B cell (primary cell): ENCODE measurements at regions of chr11 and their contacts with region 1.

Region 1: GRCh38 chr11:59135648-59136461 is 6.8 kb upstream of the FAM111A start:
- DNase-seq: peak; percentile 90
- ATAC-seq: peak; percentile 99
- H3K4me3 ChIP-seq: peak overlapping the region in 1 of 5 experiments; percentile 18
- H3K4me3 Mint-ChIP-seq: peak overlapping the region; percentile 62
- H3K27ac ChIP-seq: no peak overlapping the region
- H3K27ac Mint-ChIP-seq: peak overlapping the region; percentile 88
- H3K4me1 ChIP-seq: peaks cover 14 to 23% of the 10 kb centered on the region in 2 donors
- H3K4me1 Mint-ChIP-seq: peaks cover 31% of the 10 kb centered on the region
- H3K27me3 ChIP-seq: no peaks in the 10 kb centered on the region
- H3K27me3 Mint-ChIP-seq: no peaks in the 10 kb centered on the region
- CTCF ChIP-seq: peak; percentile 98

Region 2: GRCh38 chr11:57345555-57346211 is 1790.2 kb before region 1 on chr11:
- CTCF ChIA-PET with region 1: no interaction called
- POLR2A ChIA-PET with region 1: no interaction called
- intact Hi-C with region 1: loop called (anchors 5 kb)
- DNase-seq: peak; percentile 78
- ATAC-seq: peak; percentile 82
- H3K4me3 ChIP-seq: no peak overlapping the region
- H3K4me3 Mint-ChIP-seq: no peak overlapping the region
- H3K27ac ChIP-seq: no peak overlapping the region
- H3K27ac Mint-ChIP-seq: no peak overlapping the region
- H3K4me1 ChIP-seq: peaks cover 0 to 6% of the 10 kb centered on the region in 2 donors
- H3K4me1 Mint-ChIP-seq: peaks cover 6% of the 10 kb centered on the region
- H3K27me3 ChIP-seq: no peaks in the 10 kb centered on the region
- H3K27me3 Mint-ChIP-seq: peaks cover 8% of the 10 kb centered on the region
- CTCF ChIP-seq: peak; percentile 82

Region 3: DNA sequence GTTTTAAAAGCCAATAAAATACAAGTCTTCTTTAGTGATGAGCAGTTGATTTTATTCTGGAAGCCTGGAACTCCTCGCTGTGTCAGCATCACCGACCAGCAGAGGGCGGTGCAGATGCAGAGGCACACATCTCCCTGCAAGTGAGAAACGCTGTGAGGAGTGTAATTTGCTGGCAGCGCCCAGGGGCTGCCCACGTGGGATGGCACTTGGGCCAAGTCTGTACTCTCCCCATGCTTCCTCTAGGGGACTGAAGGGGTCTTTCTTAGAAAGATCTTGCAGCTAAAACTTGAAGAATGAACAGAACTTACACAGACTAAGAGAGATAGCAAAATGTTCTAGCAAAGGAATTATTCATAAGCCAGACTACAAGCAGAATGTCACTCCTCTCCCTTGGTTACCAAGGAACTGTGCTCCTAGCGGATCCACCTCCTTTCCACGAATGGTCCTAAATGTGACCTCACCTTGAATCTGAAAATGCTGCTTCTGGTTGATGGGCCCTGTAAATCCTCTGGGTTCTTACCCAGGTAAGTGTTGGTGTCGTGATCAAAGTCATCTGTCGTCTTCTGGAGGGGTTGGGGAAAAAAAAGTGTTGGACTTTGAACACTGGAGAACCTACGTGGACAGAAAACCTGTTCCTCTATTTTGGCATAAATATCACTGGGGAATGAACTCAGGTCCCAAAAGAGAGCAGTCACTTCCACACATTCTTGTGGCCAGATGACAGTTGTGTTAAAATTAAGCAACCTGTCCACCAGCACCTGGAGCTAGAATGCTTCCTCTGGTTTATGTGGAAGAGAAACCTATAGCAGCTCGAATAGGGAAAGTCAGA is 481.6 kb before region 1 on chr11:
- CTCF ChIA-PET with region 1: interaction called, 54 read pairs
- POLR2A ChIA-PET with region 1: no interaction called
- intact Hi-C with region 1: loop called (anchors 1 kb)
- DNase-seq: peak; percentile 81
- ATAC-seq: peak; percentile 98
- H3K4me3 ChIP-seq: no peak overlapping the region
- H3K4me3 Mint-ChIP-seq: no peak overlapping the region
- H3K27ac ChIP-seq: no peak overlapping the region
- H3K27ac Mint-ChIP-seq: no peak overlapping the region
- H3K4me1 ChIP-seq: peaks cover 0 to 5% of the 10 kb centered on the region in 2 donors
- H3K4me1 Mint-ChIP-seq: peaks cover 4% of the 10 kb centered on the region
- H3K27me3 ChIP-seq: no peaks in the 10 kb centered on the region
- H3K27me3 Mint-ChIP-seq: no peaks in the 10 kb centered on the region
- CTCF ChIP-seq: peak; percentile 93

Region 4: DNA sequence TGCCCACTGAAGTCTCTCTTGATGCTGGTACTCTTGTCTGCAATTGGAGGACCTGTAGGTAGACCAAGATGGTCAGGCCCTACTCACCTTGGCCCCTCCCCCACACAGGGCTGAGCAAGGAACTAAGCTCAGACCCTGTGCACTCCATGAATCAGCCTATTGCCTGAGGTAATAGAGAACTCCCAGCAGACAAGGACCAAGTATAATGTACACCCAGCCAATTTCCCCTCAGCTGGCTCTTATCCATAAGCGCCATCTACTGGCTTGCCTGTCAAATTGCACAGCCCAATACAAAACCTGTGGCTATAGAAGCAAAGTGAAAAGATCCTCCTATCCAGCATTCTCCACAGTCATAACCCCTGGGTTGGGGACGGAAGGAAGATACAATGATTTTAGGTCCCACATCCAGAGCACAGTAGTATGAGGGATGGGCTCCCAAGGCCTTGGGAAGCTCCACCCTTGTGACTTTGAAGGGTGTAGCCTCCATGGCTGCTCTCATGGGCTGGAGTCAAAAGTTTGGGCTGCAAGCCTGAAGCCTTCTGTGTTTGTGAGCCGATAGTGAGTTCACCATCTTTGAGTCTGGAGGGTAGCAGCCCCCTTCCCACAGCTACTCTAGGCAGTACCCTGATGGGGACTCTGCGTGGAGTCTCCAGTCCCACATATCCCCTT is 347.4 kb before region 1 on chr11:
- CTCF ChIA-PET with region 1: interaction called, 12 read pairs
- POLR2A ChIA-PET with region 1: interaction called, 5 read pairs
- intact Hi-C with region 1: no loop called
- DNase-seq: peak; percentile 53
- ATAC-seq: peak; percentile 80
- H3K4me3 ChIP-seq: no peak overlapping the region
- H3K4me3 Mint-ChIP-seq: no peak overlapping the region
- H3K27ac ChIP-seq: no peak overlapping the region
- H3K27ac Mint-ChIP-seq: no peak overlapping the region
- H3K4me1 ChIP-seq: no peaks in the 10 kb centered on the region
- H3K4me1 Mint-ChIP-seq: no peaks in the 10 kb centered on the region
- H3K27me3 ChIP-seq: no peaks in the 10 kb centered on the region
- H3K27me3 Mint-ChIP-seq: peaks cover 14% of the 10 kb centered on the region
- CTCF ChIP-seq: peak; percentile 75

Region 5: DNA sequence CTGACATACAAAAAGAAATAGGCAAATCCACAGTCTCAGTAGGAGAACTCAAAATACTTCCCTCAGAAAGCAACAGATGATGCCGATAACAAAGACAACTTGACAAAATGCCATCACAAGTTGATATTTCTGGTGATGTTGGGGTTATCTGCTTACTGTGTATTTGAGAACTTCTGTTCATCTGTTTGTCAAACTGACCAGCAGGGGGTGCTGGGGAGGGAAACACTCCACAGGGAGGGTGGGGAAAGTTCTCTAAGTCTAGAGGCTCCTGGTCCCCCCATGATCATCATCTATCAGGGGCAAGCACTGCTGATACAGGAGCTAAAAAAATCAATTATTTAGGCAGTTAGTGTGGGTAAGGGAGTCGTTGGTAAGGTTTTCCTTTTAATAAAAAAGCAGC is 177.4 kb before region 1 on chr11:
- CTCF ChIA-PET with region 1: interaction called, 63 read pairs
- POLR2A ChIA-PET with region 1: no interaction called
- intact Hi-C with region 1: loop called (anchors 1 kb)
- DNase-seq: peak; percentile 80
- ATAC-seq: peak; percentile 81
- H3K4me3 ChIP-seq: no peak overlapping the region
- H3K4me3 Mint-ChIP-seq: no peak overlapping the region
- H3K27ac ChIP-seq: no peak overlapping the region
- H3K27ac Mint-ChIP-seq: no peak overlapping the region
- H3K4me1 ChIP-seq: peaks cover 0 to 4% of the 10 kb centered on the region in 2 donors
- H3K4me1 Mint-ChIP-seq: peaks cover 4% of the 10 kb centered on the region
- H3K27me3 ChIP-seq: no peaks in the 10 kb centered on the region
- H3K27me3 Mint-ChIP-seq: no peaks in the 10 kb centered on the region
- CTCF ChIP-seq: peak; percentile 81

Region 6: DNA sequence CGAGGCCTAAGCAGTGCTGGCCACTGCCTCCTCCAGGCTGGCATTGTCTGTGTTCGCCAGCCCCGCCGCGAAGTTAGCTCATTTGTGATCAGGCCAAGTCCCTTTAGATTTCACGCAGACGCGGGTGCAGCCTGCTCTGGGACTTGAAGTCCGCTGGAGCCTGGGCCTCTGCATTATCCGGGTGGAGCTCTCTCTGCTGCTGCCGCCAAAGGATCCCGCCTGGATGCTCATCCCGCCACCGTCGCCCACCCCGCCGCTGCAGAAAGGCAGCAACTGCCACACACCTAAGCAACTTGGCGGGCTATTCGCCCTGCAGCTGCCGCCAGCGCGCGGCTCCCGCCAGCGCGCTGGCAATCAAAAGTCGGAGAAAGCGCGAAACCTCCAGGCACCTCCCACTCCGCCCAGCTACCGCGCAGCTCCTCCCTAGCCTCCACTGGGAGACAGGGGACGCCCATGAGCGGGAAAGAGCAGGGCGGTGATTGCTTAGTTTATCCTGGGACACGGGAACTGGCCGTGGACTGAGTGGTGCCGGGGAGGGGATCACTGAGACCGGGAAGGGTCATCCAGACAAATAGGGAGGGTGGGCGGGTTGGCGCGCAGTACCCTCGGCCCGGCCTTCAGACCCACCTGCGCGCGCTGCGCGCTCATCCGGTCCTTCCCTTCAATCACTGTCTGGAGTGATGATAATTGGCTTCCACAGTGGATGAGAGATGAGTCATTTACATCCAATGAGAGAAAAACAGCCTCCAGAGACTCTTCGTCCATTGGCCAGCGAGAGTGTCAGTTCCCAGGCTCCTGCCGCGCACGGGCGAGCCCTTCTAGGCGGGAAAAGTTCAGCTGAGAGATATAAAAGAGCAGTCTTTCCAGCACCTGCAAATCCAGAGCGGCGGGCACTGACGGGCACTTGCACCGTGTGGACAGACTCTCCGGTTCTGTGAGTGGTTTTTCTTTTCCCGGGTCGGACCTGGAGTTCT is 29.2 kb before region 1 on chr11 and contains the start of gene FAM111B:
- CTCF ChIA-PET with region 1: interaction called, 79 read pairs
- POLR2A ChIA-PET with region 1: interaction called, 10 read pairs
- intact Hi-C with region 1: loop called (anchors 1 kb)
- DNase-seq: peak; percentile 73
- ATAC-seq: peak; percentile 48
- H3K4me3 ChIP-seq: peak within 1 kb of the TSS; percentile 47 to 79 (median 61)
- H3K4me3 Mint-ChIP-seq: peak within 1 kb of the TSS; percentile 94
- H3K27ac ChIP-seq: peak within 1 kb of the TSS; percentile 25 to 59
- H3K27ac Mint-ChIP-seq: peak within 1 kb of the TSS; percentile 93
- H3K4me1 ChIP-seq: peaks cover 64 to 72% of the 10 kb centered on the region in 2 donors
- H3K4me1 Mint-ChIP-seq: peaks cover 83% of the 10 kb centered on the region
- H3K27me3 ChIP-seq: no peaks in the 10 kb centered on the region
- H3K27me3 Mint-ChIP-seq: no peaks in the 10 kb centered on the region
- CTCF ChIP-seq: no peak
- total RNA-seq, gene FAM111B: 148 and 155 TPM in 2 replicates